CD8-positive, alpha-beta T cell (primary cell): ENCODE measurements at regions of chr1 and their contacts with region 1.

Region 1: GRCh38 chr1:156445789-156446263 is 54.7 kb downstream of the MEF2D start:
- DNase-seq: peak; percentile 51 to 87 (median 80)
- ATAC-seq: peak; percentile 93
- H3K4me3 ChIP-seq: no peak overlapping the region
- H3K4me3 Mint-ChIP-seq: no peak overlapping the region
- H3K27ac ChIP-seq: no peak overlapping the region
- H3K27ac Mint-ChIP-seq: no peak overlapping the region
- H3K4me1 ChIP-seq: peaks cover 4% of the 10 kb centered on the region
- H3K4me1 Mint-ChIP-seq: peaks cover 5% of the 10 kb centered on the region
- H3K27me3 ChIP-seq: peaks cover 13 to 20% of the 10 kb centered on the region in 2 experiments
- H3K27me3 Mint-ChIP-seq: peaks cover 56% of the 10 kb centered on the region
- CTCF ChIP-seq: peak; percentile 94

Region 2: DNA sequence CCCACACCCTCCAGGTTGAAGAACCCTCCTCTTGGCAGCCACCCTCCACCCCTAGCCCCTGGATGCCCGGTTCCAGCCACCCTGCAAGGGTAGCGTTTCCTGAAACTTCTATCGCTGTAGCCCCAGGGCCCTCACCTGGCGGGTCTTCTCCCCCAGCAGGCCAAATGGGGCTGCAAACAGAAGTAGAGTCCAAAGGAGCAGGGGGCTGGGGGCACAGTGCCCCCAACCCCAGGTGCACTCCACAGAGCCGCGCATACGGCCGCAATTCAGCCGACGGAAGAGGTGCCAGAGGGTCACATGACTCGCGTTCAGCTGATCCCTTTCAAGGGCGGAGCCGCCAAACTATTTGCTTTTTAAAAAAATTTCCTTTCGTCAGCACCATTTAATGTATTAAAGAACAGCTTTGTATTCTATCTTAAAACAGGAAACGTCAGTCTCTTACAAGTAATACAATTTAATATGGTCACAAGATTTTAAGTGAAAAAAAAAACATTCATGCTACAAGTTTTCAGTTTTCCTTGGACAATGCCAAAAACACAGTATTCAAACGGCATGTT is 150.4 kb before region 1 on chr1 and contains the start of gene GLMP:
- CTCF ChIA-PET with region 1: no interaction called
- POLR2A ChIA-PET with region 1: no interaction called
- intact Hi-C with region 1: no loop called
- DNase-seq: peak; percentile 20 to 77 (median 63)
- ATAC-seq: peak; percentile 89
- H3K4me3 ChIP-seq: peak within 1 kb of the TSS; percentile 67 to 87
- H3K4me3 Mint-ChIP-seq: peak within 1 kb of the TSS; percentile 87
- H3K27ac ChIP-seq: peak within 1 kb of the TSS; percentile 55 to 58
- H3K27ac Mint-ChIP-seq: peak within 1 kb of the TSS; percentile 75
- H3K4me1 ChIP-seq: peaks cover 17% of the 10 kb centered on the region
- H3K4me1 Mint-ChIP-seq: peaks cover 18% of the 10 kb centered on the region
- H3K27me3 ChIP-seq: no peaks in the 10 kb centered on the region
- H3K27me3 Mint-ChIP-seq: no peaks in the 10 kb centered on the region
- CTCF ChIP-seq: no peak
- total RNA-seq, gene GLMP: 10.8 to 10.9 TPM

Region 3: GRCh38 chr1:156383023-156383422 is 62.8 kb before region 1 on chr1:
- CTCF ChIA-PET with region 1: interaction called, 372 read pairs
- POLR2A ChIA-PET with region 1: interaction called, 20 read pairs
- intact Hi-C with region 1: loop called (anchors 1 kb)
- DNase-seq: peak; percentile 21 to 73 (median 64)
- ATAC-seq: peak; percentile 82
- H3K4me3 ChIP-seq: no peak overlapping the region
- H3K4me3 Mint-ChIP-seq: no peak overlapping the region
- H3K27ac ChIP-seq: no peak overlapping the region
- H3K27ac Mint-ChIP-seq: no peak overlapping the region
- H3K4me1 ChIP-seq: peaks cover 6% of the 10 kb centered on the region
- H3K4me1 Mint-ChIP-seq: peaks cover 7% of the 10 kb centered on the region
- H3K27me3 ChIP-seq: peaks cover 0 to 3% of the 10 kb centered on the region in 2 experiments
- H3K27me3 Mint-ChIP-seq: peaks cover 9% of the 10 kb centered on the region
- CTCF ChIP-seq: peak; percentile 61

Region 4: GRCh38 chr1:156421062-156421938 is 24.5 kb before region 1 on chr1:
- CTCF ChIA-PET with region 1: interaction called, 34 read pairs
- POLR2A ChIA-PET with region 1: interaction called, 3 read pairs
- intact Hi-C with region 1: loop called (anchors 1 kb)
- DNase-seq: peak; percentile 31 to 87 (median 68)
- ATAC-seq: peak; percentile 64
- H3K4me3 ChIP-seq: peak overlapping the region; percentile 66 to 71
- H3K4me3 Mint-ChIP-seq: peak overlapping the region; percentile 93
- H3K27ac ChIP-seq: no peak overlapping the region
- H3K27ac Mint-ChIP-seq: no peak overlapping the region
- H3K4me1 ChIP-seq: peaks cover 27% of the 10 kb centered on the region
- H3K4me1 Mint-ChIP-seq: peaks cover 24% of the 10 kb centered on the region
- H3K27me3 ChIP-seq: peaks cover 28 to 29% of the 10 kb centered on the region in 2 experiments
- H3K27me3 Mint-ChIP-seq: peaks cover 68% of the 10 kb centered on the region
- CTCF ChIP-seq: no peak

Region 5: DNA sequence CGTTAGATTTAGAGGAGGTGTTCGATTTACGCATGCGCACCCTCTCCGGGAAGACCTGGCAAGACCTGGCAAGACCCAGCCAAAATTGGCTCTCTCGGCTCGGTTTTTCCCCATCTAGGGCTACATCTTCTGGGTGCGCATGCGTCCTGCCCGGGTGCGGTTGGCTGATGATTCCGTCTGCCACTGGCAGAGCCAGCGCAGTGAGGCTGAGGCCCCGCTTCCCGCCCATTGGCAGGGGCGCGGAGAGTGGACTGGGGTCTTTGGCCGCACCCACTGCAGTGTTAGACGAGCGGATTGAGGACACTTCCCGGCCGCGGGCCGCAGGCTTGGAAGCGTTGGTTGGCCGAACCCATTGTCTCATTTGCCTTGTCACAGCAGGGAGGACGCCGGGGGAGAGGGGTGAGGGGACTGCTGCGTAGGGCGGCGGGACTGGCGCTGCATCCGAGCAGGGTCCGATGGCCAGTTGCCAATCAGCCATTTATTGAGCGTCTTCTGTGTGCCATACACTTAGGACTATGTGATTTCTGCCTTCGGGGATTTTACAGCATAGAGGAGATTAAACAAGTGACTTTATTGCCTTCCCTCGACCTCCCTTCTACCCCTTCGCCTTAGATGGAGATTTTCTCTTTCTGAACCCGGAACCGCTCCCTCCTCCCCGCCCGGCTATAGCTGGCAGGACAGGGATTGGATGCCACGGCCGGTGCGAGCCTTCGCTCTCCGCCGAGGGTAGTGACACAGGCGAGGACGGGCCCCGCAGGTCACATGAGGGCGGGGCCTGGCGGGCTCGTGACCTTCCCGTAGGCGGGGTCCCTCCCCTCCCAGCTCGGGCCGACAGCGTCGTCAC is 11.0 kb after region 1 on chr1:
- CTCF ChIA-PET with region 1: interaction called, 29 read pairs
- POLR2A ChIA-PET with region 1: no interaction called
- intact Hi-C with region 1: no loop called
- DNase-seq: peak; percentile 92 to 99 (median 96)
- ATAC-seq: peak; percentile 84
- H3K4me3 ChIP-seq: peak overlapping the region; percentile 57 to 62
- H3K4me3 Mint-ChIP-seq: peak overlapping the region; percentile 93
- H3K27ac ChIP-seq: peak overlapping the region; percentile 83 to 89
- H3K27ac Mint-ChIP-seq: peak overlapping the region; percentile 100
- H3K4me1 ChIP-seq: peaks cover 4% of the 10 kb centered on the region
- H3K4me1 Mint-ChIP-seq: peaks cover 17% of the 10 kb centered on the region
- H3K27me3 ChIP-seq: no peaks in the 10 kb centered on the region
- H3K27me3 Mint-ChIP-seq: no peaks in the 10 kb centered on the region
- CTCF ChIP-seq: no peak

Region 6: GRCh38 chr1:156583821-156584622 is 138.2 kb after region 1 on chr1:
- CTCF ChIA-PET with region 1: interaction called, 14 read pairs
- POLR2A ChIA-PET with region 1: no interaction called
- intact Hi-C with region 1: no loop called
- DNase-seq: peak; percentile 52 to 89 (median 78)
- ATAC-seq: peak; percentile 53
- H3K4me3 ChIP-seq: peak overlapping the region in 1 of 2 experiments; percentile 8
- H3K4me3 Mint-ChIP-seq: peak overlapping the region; percentile 61
- H3K27ac ChIP-seq: peak overlapping the region in 1 of 2 experiments; percentile 85
- H3K27ac Mint-ChIP-seq: peak overlapping the region; percentile 81
- H3K4me1 ChIP-seq: peaks cover 28% of the 10 kb centered on the region
- H3K4me1 Mint-ChIP-seq: peaks cover 38% of the 10 kb centered on the region
- H3K27me3 ChIP-seq: no peaks in the 10 kb centered on the region
- H3K27me3 Mint-ChIP-seq: no peaks in the 10 kb centered on the region
- CTCF ChIP-seq: peak; percentile 80

Region 7: GRCh38 chr1:156652131-156652991 is 206.5 kb after region 1 on chr1:
- CTCF ChIA-PET with region 1: no interaction called
- POLR2A ChIA-PET with region 1: no interaction called
- intact Hi-C with region 1: no loop called
- DNase-seq: no peak
- ATAC-seq: no peak
- H3K4me3 ChIP-seq: no peak overlapping the region
- H3K4me3 Mint-ChIP-seq: no peak overlapping the region
- H3K27ac ChIP-seq: no peak overlapping the region
- H3K27ac Mint-ChIP-seq: no peak overlapping the region
- H3K4me1 ChIP-seq: peaks cover 11% of the 10 kb centered on the region
- H3K4me1 Mint-ChIP-seq: peaks cover 12% of the 10 kb centered on the region
- H3K27me3 ChIP-seq: peaks cover 26 to 33% of the 10 kb centered on the region in 2 experiments
- H3K27me3 Mint-ChIP-seq: peaks cover 75% of the 10 kb centered on the region
- CTCF ChIP-seq: no peak